ENCODE measurements at regions of chr5 and their contacts with region 1.

Region 1: DNA sequence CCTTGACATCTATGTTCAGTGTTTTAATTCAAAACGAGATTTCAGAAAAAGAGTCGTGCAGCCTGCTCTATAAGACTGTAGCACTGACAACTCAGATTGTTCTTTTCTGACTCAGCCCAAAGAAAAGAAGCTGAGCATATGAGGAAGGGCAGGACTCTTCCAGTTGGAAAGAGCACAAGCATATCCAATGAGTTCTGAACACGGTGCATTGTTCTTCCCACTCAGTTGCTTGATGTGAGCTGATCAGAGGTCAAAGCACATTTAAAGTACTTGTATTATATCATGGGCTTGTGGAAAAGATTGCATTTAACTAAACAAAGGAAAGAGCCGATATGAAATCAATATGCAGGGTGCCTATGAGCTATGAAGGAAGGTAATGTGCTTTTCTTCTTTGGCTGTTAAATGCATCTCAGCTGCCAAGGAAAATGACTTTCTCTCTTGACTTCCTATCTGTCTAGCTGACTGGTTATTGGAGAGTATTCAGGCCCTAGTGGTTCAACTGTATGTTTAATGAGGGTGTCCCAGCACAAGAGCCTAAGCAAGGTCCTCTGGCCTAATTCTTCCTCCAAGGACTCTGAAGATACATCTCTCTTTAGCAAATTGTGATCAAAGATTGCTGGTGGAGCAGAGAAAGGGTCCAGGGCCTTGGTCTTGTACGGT is 226.6 kb upstream of the PPP1R2B start:
- DNase-seq: no peak
- ATAC-seq: peak; percentile 33

Region 2: GRCh38 chr5:155353231-155353630 is 1270.3 kb before region 1 on chr5:
- intact Hi-C with region 1: no loop called
- DNase-seq: no peak
- ATAC-seq: no peak

Region 3: DNA sequence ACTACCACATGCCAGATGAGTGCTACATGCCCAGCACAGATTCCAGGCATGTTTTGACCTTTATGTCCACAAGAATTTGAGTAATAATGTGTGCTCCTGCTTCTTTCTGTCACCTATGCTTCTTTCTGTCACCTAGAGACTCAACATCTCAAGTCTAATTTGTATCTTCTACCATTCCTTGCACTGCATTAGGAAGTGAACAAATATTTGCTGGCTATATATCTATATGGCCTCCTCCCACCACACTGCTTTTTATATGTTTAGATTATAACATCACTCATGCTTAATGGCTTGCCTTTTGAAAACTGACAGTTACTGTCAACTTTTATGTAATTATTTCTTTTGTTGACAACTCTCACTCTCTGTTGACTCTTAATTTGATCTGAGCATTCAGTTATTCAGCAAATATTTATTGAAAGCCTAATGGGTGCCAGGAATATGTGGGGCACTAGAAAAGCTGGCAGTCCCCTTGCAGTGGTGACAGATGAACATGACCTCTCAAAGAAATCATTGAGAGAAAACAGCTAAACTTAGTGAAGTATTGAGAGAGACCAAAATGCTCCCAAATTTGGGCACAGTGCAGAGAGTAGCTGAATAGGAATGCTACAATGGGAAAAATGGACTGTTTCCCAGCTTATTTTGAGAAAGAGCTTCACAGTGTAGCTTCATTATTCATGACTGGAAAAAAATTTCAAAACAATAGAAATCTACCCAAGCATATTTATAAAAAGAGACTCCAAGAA is 38.8 kb before region 1 on chr5:
- intact Hi-C with region 1: no loop called
- DNase-seq: no peak
- ATAC-seq: peak; percentile 56

Region 4: GRCh38 chr5:156675395-156675794 is 51.9 kb after region 1 on chr5:
- intact Hi-C with region 1: loop called (anchors 10 kb)
- DNase-seq: no peak
- ATAC-seq: no peak

Region 5: DNA sequence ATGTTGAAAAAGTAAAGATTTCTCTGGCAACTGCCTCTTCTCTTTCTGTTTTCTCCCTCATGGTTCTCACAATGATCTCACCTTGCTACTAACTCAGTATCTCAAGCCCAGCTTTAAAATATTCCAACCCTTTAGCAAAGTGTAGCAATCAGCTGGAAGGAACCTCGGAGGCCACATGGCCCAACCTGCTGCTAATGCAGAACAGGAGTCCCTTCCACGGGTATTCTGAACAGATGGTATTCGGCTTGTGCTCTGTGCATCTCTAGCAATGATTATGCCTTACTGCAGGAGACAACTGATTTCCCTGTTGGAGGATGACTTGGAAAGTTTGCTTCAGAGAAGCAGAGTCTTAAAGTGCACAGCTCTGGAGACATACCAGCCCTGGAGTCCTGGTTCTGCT is 74.8 kb after region 1 on chr5:
- intact Hi-C with region 1: no loop called
- DNase-seq: no peak
- ATAC-seq: no peak